CD8-positive, alpha-beta memory T cell (primary cell): ENCODE measurements at regions of chr3 and their contacts with region 1.

Region 1: DNA sequence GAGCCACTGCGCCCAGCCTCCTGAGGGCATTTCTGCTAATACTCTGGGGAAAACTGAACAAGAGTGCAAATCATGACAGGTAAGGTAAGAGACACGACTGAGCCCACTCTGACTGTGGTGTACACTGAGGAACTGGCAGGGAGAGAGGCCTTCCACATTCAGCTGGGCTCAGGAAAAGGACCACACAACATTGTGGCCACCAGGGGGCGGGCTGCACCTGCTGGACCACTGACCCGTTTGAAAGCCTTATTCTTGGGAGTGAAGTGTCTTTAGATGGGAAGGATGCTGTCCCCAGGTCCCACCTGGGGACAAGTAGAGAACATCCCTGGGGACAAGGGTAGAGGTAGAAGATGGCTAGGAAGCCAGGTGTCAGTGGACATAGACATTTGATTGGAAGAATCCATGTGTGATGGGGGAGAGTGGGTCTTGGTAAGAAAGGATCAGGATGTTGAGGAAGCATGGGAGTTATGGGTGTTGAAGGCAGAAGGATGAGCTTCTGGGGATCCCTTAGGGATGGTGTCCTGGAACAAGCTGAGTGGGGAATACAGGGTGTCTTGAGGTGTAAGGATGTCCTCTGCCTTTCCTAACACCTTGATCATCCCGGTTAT is 6.2 kb upstream of the CTDSPL start:
- DNase-seq: peak; percentile 28 to 71 (median 58)
- H3K4me3 ChIP-seq: no peak overlapping the region
- H3K4me3 Mint-ChIP-seq: no peak overlapping the region
- H3K27ac ChIP-seq: no peak overlapping the region
- H3K27ac Mint-ChIP-seq: no peak overlapping the region
- H3K4me1 ChIP-seq: peaks cover 7% of the 10 kb centered on the region
- H3K4me1 Mint-ChIP-seq: peaks cover under 1 to 6% (median 2%) of the 10 kb centered on the region in 3 donors
- H3K27me3 ChIP-seq: no peaks in the 10 kb centered on the region
- H3K27me3 Mint-ChIP-seq: peaks cover 13 to 15% of the 10 kb centered on the region in 2 donors

Region 2: GRCh38 chr3:37680401-37680800 is 175.1 kb before region 1 on chr3:
- CTCF ChIA-PET with region 1: no interaction called
- POLR2A ChIA-PET with region 1: no interaction called
- DNase-seq: no peak
- H3K4me3 ChIP-seq: no peak overlapping the region
- H3K4me3 Mint-ChIP-seq: no peak overlapping the region
- H3K27ac ChIP-seq: no peak overlapping the region
- H3K27ac Mint-ChIP-seq: no peak overlapping the region
- H3K4me1 ChIP-seq: no peaks in the 10 kb centered on the region
- H3K4me1 Mint-ChIP-seq: no peaks in the 10 kb centered on the region
- H3K27me3 ChIP-seq: no peaks in the 10 kb centered on the region
- H3K27me3 Mint-ChIP-seq: peaks cover 2 to 5% of the 10 kb centered on the region in 2 donors

Region 3: GRCh38 chr3:37967260-37967881 is 111.9 kb after region 1 on chr3:
- CTCF ChIA-PET with region 1: interaction called, 30 read pairs
- POLR2A ChIA-PET with region 1: no interaction called
- DNase-seq: peak; percentile 12 to 58 (median 32)
- H3K4me3 ChIP-seq: no peak overlapping the region
- H3K4me3 Mint-ChIP-seq: no peak overlapping the region
- H3K27ac ChIP-seq: no peak overlapping the region
- H3K27ac Mint-ChIP-seq: no peak overlapping the region
- H3K4me1 ChIP-seq: no peaks in the 10 kb centered on the region
- H3K4me1 Mint-ChIP-seq: no peaks in the 10 kb centered on the region
- H3K27me3 ChIP-seq: no peaks in the 10 kb centered on the region
- H3K27me3 Mint-ChIP-seq: peaks cover 0 to 5% of the 10 kb centered on the region in 2 donors

Region 4: DNA sequence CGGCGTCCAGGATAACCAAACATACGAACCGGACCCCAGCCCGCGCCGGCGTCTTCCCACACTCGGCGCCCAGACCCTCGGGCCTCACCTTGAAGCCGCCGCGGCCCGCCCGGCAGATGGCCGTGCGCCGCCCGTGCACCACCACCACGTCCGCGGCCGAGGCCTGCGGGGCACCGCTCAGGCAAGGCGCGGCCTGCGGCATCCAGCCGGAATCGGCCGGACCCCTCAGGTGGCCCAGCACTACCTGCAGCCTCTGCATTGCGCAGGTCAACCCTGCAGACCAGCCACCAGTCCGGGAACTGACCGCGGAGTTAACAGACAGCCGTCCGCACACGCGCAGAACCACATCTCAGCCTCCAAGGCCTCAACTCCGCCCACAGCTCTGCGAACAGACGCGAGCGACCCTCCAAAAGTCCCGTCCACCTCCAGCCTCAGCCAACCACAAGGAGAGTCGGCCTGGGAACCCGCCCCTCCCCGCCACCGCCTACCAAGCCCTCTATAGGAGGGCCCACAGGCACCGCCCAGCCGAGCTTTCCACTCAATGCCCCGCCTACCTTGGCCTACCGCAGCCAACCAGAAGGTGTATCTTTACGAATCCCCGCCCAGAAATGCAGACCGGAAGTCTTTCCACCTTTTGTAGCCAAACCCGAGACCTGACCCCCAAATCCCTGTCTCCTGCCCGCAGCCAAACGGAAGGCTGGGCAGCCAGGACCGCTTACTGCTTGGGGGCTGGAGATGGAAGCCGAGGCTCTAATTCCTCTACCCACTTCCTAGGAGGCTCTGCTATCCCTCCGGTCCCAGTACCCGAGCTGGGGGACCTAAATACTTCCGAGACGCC is 281.5 kb after region 1 on chr3 and contains the start of gene ACAA1:
- CTCF ChIA-PET with region 1: no interaction called
- POLR2A ChIA-PET with region 1: no interaction called
- DNase-seq: peak; percentile 95 to 98 (median 96)
- H3K4me3 ChIP-seq: peak within 1 kb of the TSS; percentile 97
- H3K4me3 Mint-ChIP-seq: peak within 1 kb of the TSS; percentile 87 to 99 (median 95)
- H3K27ac ChIP-seq: peak within 1 kb of the TSS; percentile 89
- H3K27ac Mint-ChIP-seq: peak within 1 kb of the TSS; percentile 89 to 100 (median 96)
- H3K4me1 ChIP-seq: peaks cover 37% of the 10 kb centered on the region
- H3K4me1 Mint-ChIP-seq: peaks cover 66 to 85% (median 84%) of the 10 kb centered on the region in 3 donors
- H3K27me3 ChIP-seq: no peaks in the 10 kb centered on the region
- H3K27me3 Mint-ChIP-seq: no peaks in the 10 kb centered on the region
- total RNA-seq, gene ACAA1: 67.1 to 67.4 TPM